ENCODE measurements at regions of chr18 and their contacts with region 1.

Region 1: GRCh38 chr18:25639596-25639995 is 287.6 kb upstream of the ZNF521 start:
- DNase-seq: no peak
- H3K4me3 ChIP-seq: no peak overlapping the region
- H3K27ac ChIP-seq: no peak overlapping the region
- H3K4me1 ChIP-seq: no peaks in the 10 kb centered on the region
- H3K27me3 ChIP-seq: peaks cover 7% of the 10 kb centered on the region
- CTCF ChIP-seq: no peak

Region 2: DNA sequence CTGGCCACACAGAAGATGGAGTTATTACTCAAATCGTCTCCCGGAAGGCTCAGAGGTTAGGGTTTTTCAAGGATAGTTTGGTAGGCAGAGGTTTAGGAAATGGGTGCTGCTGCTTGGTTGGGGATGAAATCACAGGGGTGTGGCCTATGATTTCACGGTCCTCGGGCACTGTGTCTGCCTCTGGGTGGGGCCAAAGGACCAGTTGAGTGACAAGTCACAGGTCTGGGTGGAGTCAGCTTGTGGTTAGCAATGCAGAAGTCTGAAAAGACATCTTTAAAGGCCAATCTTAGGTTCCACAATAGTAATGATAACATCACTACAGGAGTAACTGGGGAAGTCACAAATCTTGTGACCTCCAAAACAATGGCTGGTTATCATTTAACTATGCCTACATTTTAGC is 675.4 kb before region 1 on chr18:
- CTCF ChIA-PET with region 1: no interaction called
- dilution Hi-C with region 1: no loop called
- in situ Hi-C with region 1: no loop called
- intact Hi-C with region 1: no loop called
- DNase-seq: peak; percentile 4
- H3K4me3 ChIP-seq: no peak overlapping the region
- H3K27ac ChIP-seq: no peak overlapping the region
- H3K4me1 ChIP-seq: no peaks in the 10 kb centered on the region
- H3K27me3 ChIP-seq: no peaks in the 10 kb centered on the region
- CTCF ChIP-seq: peak in 1 of 2 donors; percentile 7

Region 3: DNA sequence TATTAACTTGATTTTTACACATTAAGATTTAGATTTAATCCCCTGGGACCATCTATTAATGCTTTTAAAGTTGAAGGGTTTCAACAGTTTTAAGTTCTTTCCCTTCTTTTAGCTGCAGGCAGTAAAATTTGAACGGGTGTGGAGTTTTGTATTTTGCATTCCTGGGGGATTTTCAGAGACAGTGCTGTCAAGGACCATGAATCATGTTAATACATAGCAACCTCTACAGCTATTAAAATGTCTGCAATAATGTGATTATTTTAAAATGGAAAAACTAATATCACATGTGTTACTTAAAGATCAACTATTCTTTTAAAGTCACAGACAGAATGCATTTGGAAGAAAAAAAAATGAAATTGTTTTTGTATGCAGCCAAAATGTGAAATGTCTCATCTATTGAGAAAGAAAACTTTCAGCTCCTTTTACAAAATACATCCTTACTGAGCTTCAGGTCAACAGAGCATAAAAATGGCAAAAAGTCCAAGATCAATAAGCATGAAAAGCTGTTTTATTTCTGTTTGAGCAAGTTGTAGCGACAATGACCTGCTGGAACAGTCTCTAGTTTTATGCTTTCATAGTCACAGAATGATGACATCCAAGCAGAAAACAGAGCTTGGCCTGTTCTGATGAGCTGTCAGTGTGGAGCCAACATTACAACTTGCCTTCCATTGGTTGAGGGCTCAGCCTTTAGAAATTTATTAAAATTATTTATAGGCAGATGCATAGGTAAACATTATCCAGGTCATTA is 266.0 kb before region 1 on chr18:
- CTCF ChIA-PET with region 1: no interaction called
- dilution Hi-C with region 1: no loop called
- in situ Hi-C with region 1: no loop called
- intact Hi-C with region 1: no loop called
- DNase-seq: no peak
- H3K4me3 ChIP-seq: no peak overlapping the region
- H3K27ac ChIP-seq: no peak overlapping the region
- H3K4me1 ChIP-seq: no peaks in the 10 kb centered on the region
- H3K27me3 ChIP-seq: no peaks in the 10 kb centered on the region
- CTCF ChIP-seq: no peak

Region 4: DNA sequence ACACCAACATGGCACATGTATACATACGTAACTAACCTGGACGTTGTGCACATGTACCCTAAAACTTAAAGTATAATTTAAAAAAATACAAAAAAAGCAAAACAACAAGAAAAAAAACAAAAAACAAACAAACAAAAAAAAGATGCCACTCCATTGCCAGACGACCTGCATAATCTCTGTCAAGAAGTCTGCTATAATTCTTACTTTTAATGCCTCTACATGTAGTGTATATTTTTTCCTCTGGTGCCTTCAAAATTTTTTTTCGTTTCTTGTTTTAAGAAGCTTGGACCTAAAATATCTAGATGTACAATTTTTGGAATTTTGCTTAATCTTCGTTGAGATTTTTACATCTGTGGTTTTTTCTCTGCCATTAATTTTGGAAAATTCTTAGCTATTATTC is 52.1 kb before region 1 on chr18:
- CTCF ChIA-PET with region 1: no interaction called
- dilution Hi-C with region 1: loop called (anchors 5 kb)
- in situ Hi-C with region 1: no loop called
- intact Hi-C with region 1: no loop called
- DNase-seq: no peak
- H3K4me3 ChIP-seq: no peak overlapping the region
- H3K27ac ChIP-seq: no peak overlapping the region
- H3K4me1 ChIP-seq: no peaks in the 10 kb centered on the region
- H3K27me3 ChIP-seq: no peaks in the 10 kb centered on the region
- CTCF ChIP-seq: no peak

Measured in mammary epithelial cell (primary cell).